ENCODE measurements at regions of chr3 and their contacts with region 1.

Region 1: GRCh38 chr3:71512000-71512399 is 71.5 kb downstream of the FOXP1 start:
- DNase-seq: peak in 7 of 9 donors; percentile 60 to 76 (median 66)
- ATAC-seq: peak; percentile 96
- H3K4me3 ChIP-seq: no peak overlapping the region
- H3K4me3 Mint-ChIP-seq: peak overlapping the region in 7 of 10 donors; percentile 6 to 56 (median 44)
- H3K27ac ChIP-seq: peak overlapping the region; percentile 36
- H3K27ac Mint-ChIP-seq: peak overlapping the region in 5 of 9 donors; percentile 69 to 91 (median 83)
- H3K4me1 ChIP-seq: peaks cover 5 to 22% of the 10 kb centered on the region in 2 donors
- H3K4me1 Mint-ChIP-seq: peaks cover 11 to 54% (median 24%) of the 10 kb centered on the region in 7 donors
- H3K27me3 ChIP-seq: no peaks in the 10 kb centered on the region
- H3K27me3 Mint-ChIP-seq: no peaks in the 10 kb centered on the region

Region 2: DNA sequence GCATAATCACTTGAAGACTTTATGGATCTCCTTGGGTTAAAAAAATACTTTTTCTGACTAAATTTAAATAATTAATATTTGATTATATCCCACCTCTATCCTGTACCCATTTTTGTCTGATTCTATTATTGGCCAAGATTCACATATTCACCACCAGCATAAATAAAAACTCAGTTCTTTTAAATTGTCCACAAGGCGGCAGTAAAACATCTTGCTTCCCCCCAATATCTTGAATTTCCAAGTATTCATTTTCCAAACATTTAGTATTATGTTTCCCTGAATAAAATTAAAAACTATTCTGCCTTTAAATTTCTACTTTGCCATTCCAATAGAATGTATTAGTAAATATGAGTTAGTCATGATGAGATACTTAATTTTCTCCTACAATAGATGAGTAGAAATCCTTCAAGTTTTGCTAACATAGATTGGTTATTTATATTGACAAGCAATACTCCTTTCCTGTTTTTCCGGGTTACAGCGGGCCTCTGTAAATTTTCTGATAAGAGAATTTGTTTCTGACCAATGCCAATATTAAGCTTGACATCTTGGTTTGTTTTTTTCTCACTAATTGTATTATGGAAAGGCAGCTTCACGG is 980.8 kb before region 1 on chr3:
- CTCF ChIA-PET with region 1: no interaction called
- POLR2A ChIA-PET with region 1: no interaction called
- intact Hi-C with region 1: loop called in 1 of 2 experiments (anchors 5 kb)
- DNase-seq: peak in 4 of 9 donors; percentile 4 to 9 (median 6)
- ATAC-seq: no peak
- H3K4me3 ChIP-seq: no peak overlapping the region
- H3K4me3 Mint-ChIP-seq: no peak overlapping the region
- H3K27ac ChIP-seq: no peak overlapping the region
- H3K27ac Mint-ChIP-seq: no peak overlapping the region
- H3K4me1 ChIP-seq: no peaks in the 10 kb centered on the region
- H3K4me1 Mint-ChIP-seq: no peaks in the 10 kb centered on the region
- H3K27me3 ChIP-seq: no peaks in the 10 kb centered on the region
- H3K27me3 Mint-ChIP-seq: peaks cover 2 to 15% (median 10%) of the 10 kb centered on the region in 5 donors

Region 3: GRCh38 chr3:71006810-71007785 is 504.9 kb before region 1 on chr3:
- CTCF ChIA-PET with region 1: interaction called, 3 read pairs
- POLR2A ChIA-PET with region 1: no interaction called
- intact Hi-C with region 1: loop called (anchors 1 kb)
- DNase-seq: peak in 5 of 9 donors; percentile 25 to 45 (median 40)
- ATAC-seq: peak; percentile 54
- H3K4me3 ChIP-seq: no peak overlapping the region
- H3K4me3 Mint-ChIP-seq: peak overlapping the region in 5 of 10 donors; percentile 34 to 62 (median 49)
- H3K27ac ChIP-seq: peak overlapping the region; percentile 74
- H3K27ac Mint-ChIP-seq: peak overlapping the region in 8 of 9 donors; percentile 40 to 91 (median 87)
- H3K4me1 ChIP-seq: peaks cover 20 to 49% of the 10 kb centered on the region in 2 donors
- H3K4me1 Mint-ChIP-seq: peaks cover 35 to 84% (median 75%) of the 10 kb centered on the region in 7 donors
- H3K27me3 ChIP-seq: no peaks in the 10 kb centered on the region
- H3K27me3 Mint-ChIP-seq: no peaks in the 10 kb centered on the region

Region 4: GRCh38 chr3:71149959-71150954 is 361.7 kb before region 1 on chr3:
- CTCF ChIA-PET with region 1: no interaction called
- POLR2A ChIA-PET with region 1: interaction called, 5 read pairs
- intact Hi-C with region 1: loop called in 1 of 2 experiments (anchors 5 kb)
- DNase-seq: peak in 2 of 9 donors; percentile 22 to 24
- ATAC-seq: peak; percentile 65
- H3K4me3 ChIP-seq: no peak overlapping the region
- H3K4me3 Mint-ChIP-seq: peak overlapping the region in 7 of 10 donors; percentile 15 to 58 (median 45)
- H3K27ac ChIP-seq: peak overlapping the region; percentile 42
- H3K27ac Mint-ChIP-seq: peak overlapping the region in 8 of 9 donors; percentile 40 to 93 (median 86)
- H3K4me1 ChIP-seq: peaks cover 0 to 29% of the 10 kb centered on the region in 2 donors
- H3K4me1 Mint-ChIP-seq: peaks cover 14 to 92% (median 85%) of the 10 kb centered on the region in 7 donors
- H3K27me3 ChIP-seq: no peaks in the 10 kb centered on the region
- H3K27me3 Mint-ChIP-seq: peaks cover 0 to 2% (median 0%) of the 10 kb centered on the region in 5 donors

Region 5: DNA sequence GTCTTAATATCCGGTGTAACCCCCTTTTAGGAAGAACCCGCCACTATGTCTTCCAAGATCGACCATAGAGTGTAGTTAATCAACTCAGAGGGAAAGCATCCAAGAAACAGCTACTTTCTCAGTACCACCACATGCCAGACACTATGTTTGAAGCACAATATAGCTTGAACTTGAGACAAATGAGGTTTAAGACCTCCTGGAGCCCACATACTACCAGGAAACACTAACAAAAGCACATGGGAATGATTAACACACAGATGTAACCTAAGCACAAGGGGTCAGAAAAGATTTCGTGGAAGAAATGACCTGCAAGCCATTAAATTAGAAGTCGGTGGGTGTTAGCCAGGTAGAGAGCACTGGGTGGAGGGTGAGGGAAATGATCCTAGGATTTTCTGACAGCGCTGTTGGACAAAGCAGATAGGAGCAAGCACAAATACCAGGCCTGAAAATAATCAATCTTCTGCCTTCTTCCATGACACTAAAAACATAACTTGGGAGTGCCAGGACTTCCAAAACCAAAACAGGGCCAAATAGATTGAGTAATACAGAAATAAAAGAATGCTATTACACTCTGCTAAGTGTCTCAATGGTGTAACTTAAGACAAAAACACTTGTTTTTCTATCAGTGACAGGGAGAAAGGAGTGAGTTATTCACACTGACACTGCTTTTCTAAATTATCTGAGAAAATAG is 142.2 kb before region 1 on chr3:
- CTCF ChIA-PET with region 1: no interaction called
- POLR2A ChIA-PET with region 1: no interaction called
- intact Hi-C with region 1: loop called in 1 of 2 experiments (anchors 1 kb)
- DNase-seq: no peak
- ATAC-seq: no peak
- H3K4me3 ChIP-seq: no peak overlapping the region
- H3K4me3 Mint-ChIP-seq: peak overlapping the region in 2 of 10 donors; percentile 12 to 73
- H3K27ac ChIP-seq: peak overlapping the region; percentile 88
- H3K27ac Mint-ChIP-seq: peak overlapping the region in 8 of 9 donors; percentile 88 to 100 (median 96)
- H3K4me1 ChIP-seq: peaks cover 19 to 78% of the 10 kb centered on the region in 2 donors
- H3K4me1 Mint-ChIP-seq: peaks cover 10 to 94% (median 89%) of the 10 kb centered on the region in 7 donors
- H3K27me3 ChIP-seq: no peaks in the 10 kb centered on the region
- H3K27me3 Mint-ChIP-seq: peaks cover 0 to 39% (median 0%) of the 10 kb centered on the region in 5 donors

Region 6: GRCh38 chr3:71456156-71456555 is 55.8 kb before region 1 on chr3:
- CTCF ChIA-PET with region 1: interaction called, 4 read pairs
- POLR2A ChIA-PET with region 1: interaction called, 5 read pairs
- intact Hi-C with region 1: loop called in 1 of 2 experiments (anchors 1 kb)
- DNase-seq: peak in 5 of 9 donors; percentile 41 to 65 (median 57)
- ATAC-seq: peak; percentile 59
- H3K4me3 ChIP-seq: peak overlapping the region; percentile 23
- H3K4me3 Mint-ChIP-seq: peak overlapping the region; percentile 75 to 90 (median 78)
- H3K27ac ChIP-seq: peak overlapping the region; percentile 90
- H3K27ac Mint-ChIP-seq: peak overlapping the region; percentile 90 to 99 (median 97)
- H3K4me1 ChIP-seq: peaks cover 72 to 84% of the 10 kb centered on the region in 2 donors
- H3K4me1 Mint-ChIP-seq: peaks cover 56 to 100% (median 92%) of the 10 kb centered on the region in 7 donors
- H3K27me3 ChIP-seq: no peaks in the 10 kb centered on the region
- H3K27me3 Mint-ChIP-seq: peaks cover 0 to 13% (median 0%) of the 10 kb centered on the region in 5 donors